ENCODE measurements at regions of chr3 and their contacts with region 1.

Region 1: GRCh38 chr3:24145981-24146822 is 201.1 kb downstream of the NR1D2 start:
- DNase-seq: no peak
- H3K4me3 ChIP-seq: no peak overlapping the region
- H3K27ac ChIP-seq: no peak overlapping the region
- H3K4me1 ChIP-seq: peaks cover 0 to 2% (median 0%) of the 10 kb centered on the region in 4 experiments; a peak in 1 of 7 replicates
- H3K27me3 ChIP-seq: no peaks in the 10 kb centered on the region
- CTCF ChIP-seq: no peak
- EP300 ChIP-seq: no peak
- POLR2A ChIP-seq: no peak
- RAD21 ChIP-seq: no peak

Region 2: GRCh38 chr3:24156465-24156864 is 10.3 kb after region 1 on chr3:
- CTCF ChIA-PET with region 1: interaction called, 13 read pairs
- POLR2A ChIA-PET with region 1: no interaction called
- DNase-seq: no peak
- H3K4me3 ChIP-seq: no peak overlapping the region
- H3K27ac ChIP-seq: no peak overlapping the region
- H3K4me1 ChIP-seq: peaks cover 2 to 7% (median 5%) of the 10 kb centered on the region in 4 experiments; a peak in 3 of 7 replicates
- H3K27me3 ChIP-seq: no peaks in the 10 kb centered on the region
- CTCF ChIP-seq: no peak
- EP300 ChIP-seq: no peak
- POLR2A ChIP-seq: no peak
- RAD21 ChIP-seq: no peak